GM12878 (cell line): ENCODE measurements at regions of chr6 and their contacts with region 1.

Region 1: GRCh38 chr6:44002593-44003344 is 124.5 kb downstream of the MRPL14 start:
- DNase-seq: no peak
- ATAC-seq: peak; percentile 28
- H3K4me3 ChIP-seq: peak overlapping the region; percentile 49
- H3K27ac ChIP-seq: no peak overlapping the region; the same call in 1 of the 2 replicates
- H3K4me1 ChIP-seq: peaks cover 20% of the 10 kb centered on the region
- H3K27me3 ChIP-seq: peaks cover 0 to 4% of the 10 kb centered on the region in 2 experiments; a peak in 2 of 4 replicates
- CTCF ChIP-seq: peak in 2 of 3 experiments; percentile 4 to 53; a peak in 3 of 6 replicates
- EP300 ChIP-seq: no peak; a peak in 1 of 4 replicates
- POLR2A ChIP-seq: no peak
- RAD21 ChIP-seq: 0 out of 2 replicates have a peak, but pooled peaks have one; percentile 8

Region 2: DNA sequence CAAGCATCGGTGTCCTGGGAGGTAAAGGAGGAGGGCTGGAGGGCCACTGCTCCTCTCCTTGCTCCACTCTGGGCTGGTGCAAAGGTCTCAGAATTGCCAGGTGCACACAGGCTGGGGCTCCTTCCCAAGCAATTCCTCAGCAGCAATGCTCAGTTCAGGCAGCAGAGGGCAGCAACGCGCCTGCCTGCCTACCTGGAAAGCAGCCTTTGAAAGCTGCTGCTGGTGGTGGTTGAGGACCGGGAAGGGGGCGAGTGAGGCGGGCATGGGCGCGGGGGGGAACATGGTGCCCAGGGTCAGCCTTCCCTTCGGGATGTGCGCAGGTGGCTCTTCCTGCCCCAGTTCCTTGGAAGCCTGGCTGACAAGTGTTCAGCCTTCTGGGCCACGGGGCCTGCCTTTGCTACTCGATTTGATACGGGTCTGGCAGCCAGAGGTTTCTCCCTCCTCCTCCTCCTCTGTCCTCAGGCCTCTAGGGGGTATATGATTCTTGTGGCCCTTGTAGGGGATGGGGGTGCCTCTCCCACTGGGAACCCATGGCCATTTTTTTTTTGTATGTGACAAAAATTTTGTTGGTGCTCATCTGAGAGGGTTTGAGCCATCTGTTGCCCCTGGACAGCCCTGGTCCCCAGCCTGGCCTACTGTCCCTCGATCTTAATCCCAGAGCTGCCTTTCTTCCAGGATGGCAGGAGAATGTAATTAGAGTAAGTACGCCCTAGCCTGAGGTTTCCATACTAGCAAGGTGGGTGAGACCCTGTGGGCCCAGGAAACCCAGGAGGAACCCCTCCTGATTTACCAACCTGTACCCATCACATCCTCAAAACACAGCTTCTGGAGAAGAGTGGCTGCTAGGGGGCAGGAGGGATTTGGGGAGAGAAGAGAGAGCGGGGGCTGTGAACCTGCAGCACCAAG is 335.3 kb before region 1 on chr6:
- CTCF ChIA-PET with region 1: interaction called, 8 read pairs
- POLR2A ChIA-PET with region 1: no interaction called
- RAD21 ChIA-PET with region 1: interaction called, 3 read pairs
- SMC1A ChIA-PET with region 1: no interaction called
- in situ Hi-C with region 1: no loop called
- intact Hi-C with region 1: loop called (anchors 5 kb)
- DNase-seq: no peak
- ATAC-seq: peak; percentile 84
- H3K4me3 ChIP-seq: no peak overlapping the region
- H3K27ac ChIP-seq: peak overlapping the region; percentile 69
- H3K4me1 ChIP-seq: peaks cover 38% of the 10 kb centered on the region
- H3K27me3 ChIP-seq: no peaks in the 10 kb centered on the region
- CTCF ChIP-seq: peak; percentile 95 to 99 (median 95)
- EP300 ChIP-seq: no peak
- POLR2A ChIP-seq: peak; percentile 70
- RAD21 ChIP-seq: peak; percentile 92

Region 3: DNA sequence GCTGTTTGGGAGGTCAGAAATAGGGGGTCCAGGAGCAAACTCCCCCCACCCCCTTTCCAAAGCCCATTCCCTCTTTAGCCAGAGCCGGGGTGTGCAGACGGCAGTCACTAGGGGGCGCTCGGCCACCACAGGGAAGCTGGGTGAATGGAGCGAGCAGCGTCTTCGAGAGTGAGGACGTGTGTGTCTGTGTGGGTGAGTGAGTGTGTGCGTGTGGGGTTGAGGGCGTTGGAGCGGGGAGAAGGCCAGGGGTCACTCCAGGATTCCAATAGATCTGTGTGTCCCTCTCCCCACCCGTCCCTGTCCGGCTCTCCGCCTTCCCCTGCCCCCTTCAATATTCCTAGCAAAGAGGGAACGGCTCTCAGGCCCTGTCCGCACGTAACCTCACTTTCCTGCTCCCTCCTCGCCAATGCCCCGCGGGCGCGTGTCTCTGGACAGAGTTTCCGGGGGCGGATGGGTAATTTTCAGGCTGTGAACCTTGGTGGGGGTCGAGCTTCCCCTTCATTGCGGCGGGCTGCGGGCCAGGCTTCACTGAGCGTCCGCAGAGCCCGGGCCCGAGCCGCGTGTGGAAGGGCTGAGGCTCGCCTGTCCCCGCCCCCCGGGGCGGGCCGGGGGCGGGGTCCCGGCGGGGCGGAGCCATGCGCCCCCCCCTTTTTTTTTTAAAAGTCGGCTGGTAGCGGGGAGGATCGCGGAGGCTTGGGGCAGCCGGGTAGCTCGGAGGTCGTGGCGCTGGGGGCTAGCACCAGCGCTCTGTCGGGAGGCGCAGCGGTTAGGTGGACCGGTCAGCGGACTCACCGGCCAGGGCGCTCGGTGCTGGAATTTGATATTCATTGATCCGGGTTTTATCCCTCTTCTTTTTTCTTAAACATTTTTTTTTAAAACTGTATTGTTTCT is 233.0 kb before region 1 on chr6 and contains the start of gene VEGFA:
- CTCF ChIA-PET with region 1: interaction called, 70 read pairs
- POLR2A ChIA-PET with region 1: interaction called, 42 read pairs
- RAD21 ChIA-PET with region 1: interaction called, 54 read pairs
- SMC1A ChIA-PET with region 1: interaction called, 33 read pairs
- in situ Hi-C with region 1: loop called (anchors 5 kb)
- intact Hi-C with region 1: loop called (anchors 1 kb)
- DNase-seq: peak; percentile 64
- ATAC-seq: peak; percentile 68
- H3K4me3 ChIP-seq: peak within 1 kb of the TSS; percentile 98
- H3K27ac ChIP-seq: peak within 1 kb of the TSS; percentile 88
- H3K4me1 ChIP-seq: peaks cover 14% of the 10 kb centered on the region
- H3K27me3 ChIP-seq: no peaks in the 10 kb centered on the region
- CTCF ChIP-seq: peak; percentile 97 to 99 (median 98)
- EP300 ChIP-seq: no peak
- POLR2A ChIP-seq: peak; percentile 90
- RAD21 ChIP-seq: peak; percentile 98
- polyA plus RNA-seq, gene VEGFA: 2.9 to 4.3 TPM

Region 4: GRCh38 chr6:43856005-43856765 is 146.6 kb before region 1 on chr6:
- CTCF ChIA-PET with region 1: interaction called, 3 read pairs
- POLR2A ChIA-PET with region 1: interaction called, 3 read pairs
- RAD21 ChIA-PET with region 1: interaction called, 4 read pairs
- SMC1A ChIA-PET with region 1: no interaction called
- in situ Hi-C with region 1: no loop called
- intact Hi-C with region 1: loop called (anchors 5 kb)
- DNase-seq: no peak
- ATAC-seq: 0 out of 3 replicates have a peak, but pooled peaks have one; percentile 9
- H3K4me3 ChIP-seq: no peak overlapping the region
- H3K27ac ChIP-seq: no peak overlapping the region
- H3K4me1 ChIP-seq: peaks cover 8% of the 10 kb centered on the region
- H3K27me3 ChIP-seq: no peaks in the 10 kb centered on the region; a peak in 1 of 4 replicates
- CTCF ChIP-seq: peak in 2 of 3 experiments; percentile 13 to 28; a peak in 3 of 6 replicates
- EP300 ChIP-seq: no peak
- POLR2A ChIP-seq: no peak
- RAD21 ChIP-seq: no peak

Region 5: GRCh38 chr6:43904311-43905123 is 98.3 kb before region 1 on chr6:
- CTCF ChIA-PET with region 1: no interaction called
- POLR2A ChIA-PET with region 1: no interaction called
- RAD21 ChIA-PET with region 1: no interaction called
- SMC1A ChIA-PET with region 1: no interaction called
- in situ Hi-C with region 1: no loop called
- intact Hi-C with region 1: no loop called
- DNase-seq: no peak
- ATAC-seq: no peak
- H3K4me3 ChIP-seq: no peak overlapping the region
- H3K27ac ChIP-seq: no peak overlapping the region
- H3K4me1 ChIP-seq: no peaks in the 10 kb centered on the region; the same call in 1 of the 2 replicates
- H3K27me3 ChIP-seq: no peaks in the 10 kb centered on the region; a peak in 2 of 4 replicates
- CTCF ChIP-seq: no peak
- EP300 ChIP-seq: no peak
- POLR2A ChIP-seq: no peak
- RAD21 ChIP-seq: no peak

Region 6: DNA sequence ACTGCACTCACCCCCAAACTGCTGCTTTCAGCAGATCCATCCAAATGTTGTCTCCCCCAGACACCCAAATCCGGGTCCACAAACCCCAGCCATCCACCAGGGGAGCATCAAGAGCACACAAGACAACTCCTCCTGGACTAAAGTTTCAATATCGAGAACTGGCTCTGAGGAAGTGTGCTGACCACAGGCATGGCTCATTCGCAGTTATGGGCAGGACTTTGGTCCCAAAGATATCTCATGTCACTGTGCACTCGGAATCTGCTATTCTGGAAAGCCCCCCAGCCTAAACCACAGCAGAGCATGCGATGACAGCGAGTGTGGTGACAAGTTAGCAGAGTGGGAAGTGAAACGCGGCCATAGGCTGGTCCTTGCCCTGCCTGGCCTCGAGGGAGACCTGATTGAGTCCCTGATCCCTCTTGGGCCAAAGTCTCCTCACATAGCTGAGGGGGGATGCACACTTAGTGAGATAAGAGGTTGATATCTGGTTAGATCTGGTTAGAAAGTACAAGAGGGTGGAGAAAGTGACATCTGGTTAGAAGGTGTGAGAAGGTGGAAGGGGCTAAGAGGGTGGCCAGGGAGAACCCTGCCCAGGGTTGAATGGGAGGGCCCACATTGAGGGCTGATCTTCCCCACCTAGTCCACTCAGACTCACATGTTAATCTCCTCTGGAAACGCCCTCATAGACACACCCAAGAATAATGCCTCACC is 25.2 kb before region 1 on chr6:
- CTCF ChIA-PET with region 1: interaction called, 6 read pairs
- POLR2A ChIA-PET with region 1: interaction called, 54 read pairs
- RAD21 ChIA-PET with region 1: interaction called, 22 read pairs
- SMC1A ChIA-PET with region 1: interaction called, 11 read pairs
- in situ Hi-C with region 1: no loop called
- intact Hi-C with region 1: loop called (anchors 1 kb)
- DNase-seq: peak; percentile 91
- ATAC-seq: peak; percentile 95
- H3K4me3 ChIP-seq: no peak overlapping the region
- H3K27ac ChIP-seq: peak overlapping the region; percentile 45
- H3K4me1 ChIP-seq: peaks cover 18% of the 10 kb centered on the region
- H3K27me3 ChIP-seq: no peaks in the 10 kb centered on the region
- CTCF ChIP-seq: peak; percentile 26 to 50 (median 50); a peak in 5 of 6 replicates
- EP300 ChIP-seq: peak; percentile 89 to 94
- POLR2A ChIP-seq: no peak
- RAD21 ChIP-seq: peak; percentile 44

Region 7: DNA sequence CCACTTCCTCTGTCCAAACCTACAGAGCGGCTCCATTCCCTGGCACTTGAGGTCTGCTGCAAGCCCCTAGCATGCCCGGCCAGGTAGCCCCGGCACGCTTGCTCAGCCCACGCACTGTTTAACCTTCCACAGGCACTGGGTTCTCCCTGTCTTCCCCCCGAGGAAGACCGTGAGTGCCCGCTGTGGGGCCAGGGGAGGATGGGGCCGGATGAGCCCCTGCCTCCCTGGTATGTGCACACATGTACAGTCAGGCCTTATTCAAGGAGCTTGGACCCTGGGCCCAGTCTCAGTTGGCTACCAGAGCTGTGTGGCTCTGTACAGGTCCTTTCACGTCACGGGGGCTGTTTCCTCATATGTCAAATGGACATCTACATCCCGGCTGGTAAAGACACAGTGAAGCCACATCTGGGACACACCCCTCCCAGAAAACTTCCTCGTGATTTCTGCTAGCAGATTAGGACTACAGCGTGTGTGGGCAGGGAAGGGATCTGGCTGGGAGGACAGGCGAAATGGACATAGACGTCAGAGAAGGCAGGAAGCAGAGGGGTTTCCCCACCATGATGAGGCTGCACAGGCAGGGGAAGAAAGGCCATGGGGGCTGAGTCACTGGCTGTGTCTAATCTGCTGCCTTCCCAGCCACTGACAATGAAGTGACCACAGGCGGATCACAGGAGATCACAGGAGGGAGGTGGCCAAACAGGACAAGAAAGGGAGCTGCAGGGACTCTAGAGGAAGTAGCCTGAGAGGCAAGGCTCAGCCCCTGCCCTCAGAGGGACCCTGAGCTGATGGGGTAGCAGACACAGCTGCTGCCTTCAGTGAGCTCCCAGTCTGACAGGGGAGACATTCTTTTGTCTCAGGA is 61.5 kb after region 1 on chr6:
- CTCF ChIA-PET with region 1: interaction called, 7 read pairs
- POLR2A ChIA-PET with region 1: interaction called, 11 read pairs
- RAD21 ChIA-PET with region 1: interaction called, 6 read pairs
- SMC1A ChIA-PET with region 1: interaction called, 3 read pairs
- in situ Hi-C with region 1: no loop called
- intact Hi-C with region 1: no loop called
- DNase-seq: no peak
- ATAC-seq: peak; percentile 77
- H3K4me3 ChIP-seq: no peak overlapping the region
- H3K27ac ChIP-seq: no peak overlapping the region
- H3K4me1 ChIP-seq: peaks cover 44% of the 10 kb centered on the region
- H3K27me3 ChIP-seq: no peaks in the 10 kb centered on the region
- CTCF ChIP-seq: no peak
- EP300 ChIP-seq: no peak
- POLR2A ChIP-seq: no peak
- RAD21 ChIP-seq: no peak